ENCODE measurements at regions of chr17 and their contacts with region 1.

Region 1: GRCh38 chr17:34420254-34420766 is 57.3 kb upstream of the CCL1 start:
- DNase-seq: peak; percentile 81
- ATAC-seq: peak; percentile 58
- H3K4me3 Mint-ChIP-seq: no peak overlapping the region
- H3K27ac Mint-ChIP-seq: no peak overlapping the region
- H3K4me1 Mint-ChIP-seq: peaks cover 10% of the 10 kb centered on the region
- H3K27me3 Mint-ChIP-seq: peaks cover 11% of the 10 kb centered on the region
- CTCF ChIP-seq: peak; percentile 97

Region 2: DNA sequence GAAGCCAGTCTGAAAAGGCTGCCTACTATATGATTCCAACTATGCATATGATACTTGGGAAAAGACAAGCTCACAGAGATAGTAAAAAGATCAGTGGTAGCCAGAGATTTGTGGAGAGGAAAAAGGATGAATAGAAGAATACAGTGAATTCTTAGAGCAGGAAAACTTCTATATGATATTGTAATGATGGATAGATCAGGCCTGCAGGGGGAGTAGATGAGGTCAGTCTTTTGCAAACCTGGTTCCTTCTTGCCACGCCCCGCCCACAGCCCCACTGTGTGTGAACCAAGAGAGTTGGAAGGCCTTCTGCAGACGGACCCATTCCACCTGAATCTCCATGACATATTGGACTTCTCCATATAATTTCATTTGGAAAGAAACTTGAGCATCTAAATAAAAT is 101.8 kb before region 1 on chr17:
- CTCF ChIA-PET with region 1: no interaction called
- POLR2A ChIA-PET with region 1: no interaction called
- DNase-seq: peak; percentile 63
- ATAC-seq: peak; percentile 85
- H3K4me3 Mint-ChIP-seq: no peak overlapping the region
- H3K27ac Mint-ChIP-seq: no peak overlapping the region
- H3K4me1 Mint-ChIP-seq: no peaks in the 10 kb centered on the region; the same call in 1 of the 2 replicates
- H3K27me3 Mint-ChIP-seq: peaks cover 14% of the 10 kb centered on the region
- CTCF ChIP-seq: no peak; the same call in 1 of the 2 replicates

Region 3: DNA sequence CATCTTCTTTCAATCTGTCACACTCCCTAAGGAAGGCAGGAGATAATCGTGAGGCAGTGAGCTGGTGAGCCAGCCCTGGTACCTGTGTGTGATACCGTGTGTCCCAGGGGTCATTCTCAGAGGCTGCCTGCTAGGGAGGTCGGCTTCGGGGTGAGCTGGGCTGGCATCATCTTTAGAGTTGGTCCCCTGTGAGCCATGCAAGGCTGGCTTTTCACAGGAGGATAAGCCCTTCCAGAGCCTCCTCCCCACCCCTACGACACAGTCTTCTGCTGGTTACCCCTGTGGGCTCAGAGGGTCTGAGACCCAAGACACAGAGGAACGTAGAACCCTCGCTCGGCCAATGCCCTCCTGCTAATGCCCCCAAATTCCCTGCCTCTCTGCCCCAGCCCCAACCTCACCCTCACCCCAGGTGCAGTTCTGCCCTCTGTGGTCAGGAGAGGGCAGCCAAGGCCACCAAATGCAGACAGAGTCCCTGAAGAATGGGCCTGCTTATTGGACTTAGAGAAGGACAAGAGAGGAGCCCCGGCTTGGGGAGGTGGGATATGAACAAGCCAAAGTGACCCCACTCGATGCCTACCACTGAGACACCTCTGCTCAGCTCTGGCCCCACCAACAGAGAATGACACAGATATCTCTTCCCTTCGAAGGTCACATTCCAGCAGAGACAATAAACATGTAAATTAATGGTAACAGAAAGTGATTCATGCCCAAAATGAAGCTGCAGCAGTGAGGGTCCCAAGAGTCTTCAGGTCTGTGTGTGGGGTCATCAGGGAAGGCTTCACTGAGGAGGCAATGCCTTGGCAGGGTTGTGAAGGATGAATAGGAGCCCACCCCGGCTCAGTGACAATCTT is 23.5 kb after region 1 on chr17:
- CTCF ChIA-PET with region 1: interaction called, 11 read pairs
- POLR2A ChIA-PET with region 1: no interaction called
- DNase-seq: peak; percentile 56
- ATAC-seq: peak; percentile 88
- H3K4me3 Mint-ChIP-seq: no peak overlapping the region
- H3K27ac Mint-ChIP-seq: no peak overlapping the region
- H3K4me1 Mint-ChIP-seq: peaks cover 13% of the 10 kb centered on the region
- H3K27me3 Mint-ChIP-seq: no peaks in the 10 kb centered on the region; the same call in 1 of the 2 replicates
- CTCF ChIP-seq: peak; percentile 40; the same call in 1 of the 2 replicates

Region 4: DNA sequence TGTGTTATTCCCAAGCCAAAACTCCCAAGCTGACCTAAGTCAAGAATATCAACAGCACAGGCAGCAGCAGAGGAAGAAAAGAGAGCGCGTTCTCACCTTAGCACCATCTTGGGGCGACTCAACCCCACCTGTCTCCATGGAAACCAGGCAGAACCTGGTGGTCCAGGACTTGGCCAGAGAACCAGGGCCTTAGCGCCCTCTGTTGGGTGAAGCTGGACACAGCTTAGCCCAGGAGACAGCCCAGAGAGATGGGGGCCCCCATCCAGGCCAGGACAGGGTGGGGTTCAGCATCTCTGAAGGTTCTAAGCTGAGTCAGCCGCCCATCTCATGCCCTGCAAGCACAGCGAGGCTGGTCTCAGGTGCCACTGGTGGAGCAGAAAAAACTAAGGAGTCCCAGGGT is 99.0 kb after region 1 on chr17:
- CTCF ChIA-PET with region 1: interaction called, 16 read pairs
- POLR2A ChIA-PET with region 1: no interaction called
- DNase-seq: peak; percentile 85
- ATAC-seq: peak; percentile 96
- H3K4me3 Mint-ChIP-seq: no peak overlapping the region
- H3K27ac Mint-ChIP-seq: no peak overlapping the region
- H3K4me1 Mint-ChIP-seq: peaks cover 5% of the 10 kb centered on the region; the same call in 1 of the 2 replicates
- H3K27me3 Mint-ChIP-seq: no peaks in the 10 kb centered on the region; the same call in 1 of the 2 replicates
- CTCF ChIP-seq: peak; percentile 66

Measured in WTC11 (cell line).